CD4-positive, alpha-beta memory T cell (primary cell): ENCODE measurements at regions of chr12 and their contacts with region 1.

Region 1: DNA sequence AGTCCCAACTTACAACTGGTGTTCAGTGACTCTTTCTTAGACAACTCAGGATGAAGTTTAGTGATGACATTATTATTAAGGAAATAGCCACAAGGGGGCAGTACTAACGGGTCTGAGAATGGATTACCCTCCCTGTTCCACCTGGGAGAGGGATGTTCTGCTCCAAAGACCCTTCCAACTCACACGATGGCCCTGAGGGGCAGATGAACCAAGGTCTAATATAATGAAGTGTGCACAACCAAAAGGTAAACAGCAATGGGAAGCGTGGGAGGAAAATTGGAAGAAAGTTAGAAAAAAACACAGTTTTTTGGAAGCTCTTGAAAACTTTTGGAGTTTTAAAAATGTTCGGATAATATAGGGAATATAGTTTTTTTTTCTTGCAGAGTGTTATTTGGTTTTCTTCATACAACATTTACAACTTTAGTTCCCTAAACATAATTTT is 24.0 kb downstream of the FGF6 start:
- DNase-seq: peak in 4 of 5 donors; percentile 42 to 57 (median 46)
- H3K4me3 ChIP-seq: no peak overlapping the region
- H3K4me3 Mint-ChIP-seq: no peak overlapping the region
- H3K27ac ChIP-seq: no peak overlapping the region
- H3K27ac Mint-ChIP-seq: peak overlapping the region in 1 of 7 donors; percentile 38
- H3K4me1 ChIP-seq: no peaks in the 10 kb centered on the region
- H3K4me1 Mint-ChIP-seq: peaks cover 0 to 1% (median 0%) of the 10 kb centered on the region in 4 donors
- H3K27me3 ChIP-seq: no peaks in the 10 kb centered on the region
- H3K27me3 Mint-ChIP-seq: peaks cover 5 to 6% of the 10 kb centered on the region in 2 donors

Region 2: DNA sequence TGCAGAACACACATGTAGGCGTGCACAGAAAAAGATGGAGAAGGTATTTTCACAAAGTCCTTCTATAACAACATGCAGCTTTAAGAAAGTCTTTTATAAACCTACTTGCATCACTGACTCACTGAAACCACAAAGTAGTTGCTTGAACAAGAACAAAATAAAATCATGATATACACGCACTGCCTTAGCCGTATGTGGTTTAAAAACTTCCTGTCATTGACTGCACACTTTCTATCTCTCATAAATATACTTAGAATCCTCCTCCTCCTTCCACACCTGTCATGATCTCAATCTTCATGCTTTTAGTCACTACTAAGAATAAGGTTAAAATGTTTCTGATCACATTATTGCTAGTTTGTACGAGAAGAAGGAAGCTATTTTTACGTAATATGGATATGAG is 85.3 kb after region 1 on chr12:
- CTCF ChIA-PET with region 1: interaction called, 4 read pairs
- POLR2A ChIA-PET with region 1: no interaction called
- intact Hi-C with region 1: loop called (anchors 1 kb)
- DNase-seq: peak; percentile 61 to 80 (median 70)
- H3K4me3 ChIP-seq: no peak overlapping the region
- H3K4me3 Mint-ChIP-seq: peak overlapping the region; percentile 43 to 83 (median 60)
- H3K27ac ChIP-seq: peak overlapping the region; percentile 44
- H3K27ac Mint-ChIP-seq: peak overlapping the region; percentile 51 to 94 (median 92)
- H3K4me1 ChIP-seq: peaks cover 23% of the 10 kb centered on the region
- H3K4me1 Mint-ChIP-seq: peaks cover 16 to 27% (median 22%) of the 10 kb centered on the region in 4 donors
- H3K27me3 ChIP-seq: no peaks in the 10 kb centered on the region
- H3K27me3 Mint-ChIP-seq: no peaks in the 10 kb centered on the region